ENCODE measurements at regions of chrX and their contacts with region 1.

Region 1: DNA sequence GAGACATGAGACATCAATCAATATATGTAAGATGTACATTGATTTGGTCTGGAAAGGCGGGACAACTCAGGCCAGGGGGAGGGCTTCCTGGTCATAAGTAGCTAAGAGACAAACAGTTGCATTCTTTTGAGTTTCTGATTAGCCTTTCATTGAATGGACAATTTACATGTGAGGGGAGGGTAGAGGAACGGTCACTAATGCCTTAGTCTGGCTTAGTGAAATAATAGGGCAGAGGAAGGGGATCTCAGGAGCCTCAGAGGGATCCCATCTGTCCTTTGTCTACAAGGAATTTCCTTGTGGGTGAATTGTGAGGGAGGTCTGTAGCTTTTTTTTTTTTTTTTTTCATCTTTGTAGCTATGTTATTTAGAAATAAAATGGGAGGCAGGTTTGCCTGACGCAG is 88.3 kb downstream of the GK start:
- DNase-seq: no peak
- ATAC-seq: no peak
- H3K4me3 ChIP-seq: no peak overlapping the region
- H3K27ac ChIP-seq: no peak overlapping the region
- H3K4me1 ChIP-seq: no peaks in the 10 kb centered on the region
- H3K27me3 ChIP-seq: peaks cover 0 to 6% (median 0%) of the 10 kb centered on the region in 3 donors
- CTCF ChIP-seq: no peak

Region 2: GRCh38 chrX:29604381-29604780 is 1137.2 kb before region 1 on chrX:
- intact Hi-C with region 1: no loop called
- DNase-seq: no peak
- ATAC-seq: no peak
- H3K4me3 ChIP-seq: no peak overlapping the region
- H3K27ac ChIP-seq: no peak overlapping the region
- H3K4me1 ChIP-seq: no peaks in the 10 kb centered on the region
- H3K27me3 ChIP-seq: no peaks in the 10 kb centered on the region
- CTCF ChIP-seq: no peak

Region 3: GRCh38 chrX:31279359-31279758 is 537.8 kb after region 1 on chrX:
- intact Hi-C with region 1: loop called in 1 of 2 experiments (anchors 5 kb)
- DNase-seq: no peak
- ATAC-seq: peak; percentile 73 to 89 (median 87)
- H3K4me3 ChIP-seq: no peak overlapping the region
- H3K27ac ChIP-seq: no peak overlapping the region
- H3K4me1 ChIP-seq: no peaks in the 10 kb centered on the region
- H3K27me3 ChIP-seq: no peaks in the 10 kb centered on the region
- CTCF ChIP-seq: peak; percentile 18